ENCODE measurements at regions of chr10 and their contacts with region 1.

Region 1: DNA sequence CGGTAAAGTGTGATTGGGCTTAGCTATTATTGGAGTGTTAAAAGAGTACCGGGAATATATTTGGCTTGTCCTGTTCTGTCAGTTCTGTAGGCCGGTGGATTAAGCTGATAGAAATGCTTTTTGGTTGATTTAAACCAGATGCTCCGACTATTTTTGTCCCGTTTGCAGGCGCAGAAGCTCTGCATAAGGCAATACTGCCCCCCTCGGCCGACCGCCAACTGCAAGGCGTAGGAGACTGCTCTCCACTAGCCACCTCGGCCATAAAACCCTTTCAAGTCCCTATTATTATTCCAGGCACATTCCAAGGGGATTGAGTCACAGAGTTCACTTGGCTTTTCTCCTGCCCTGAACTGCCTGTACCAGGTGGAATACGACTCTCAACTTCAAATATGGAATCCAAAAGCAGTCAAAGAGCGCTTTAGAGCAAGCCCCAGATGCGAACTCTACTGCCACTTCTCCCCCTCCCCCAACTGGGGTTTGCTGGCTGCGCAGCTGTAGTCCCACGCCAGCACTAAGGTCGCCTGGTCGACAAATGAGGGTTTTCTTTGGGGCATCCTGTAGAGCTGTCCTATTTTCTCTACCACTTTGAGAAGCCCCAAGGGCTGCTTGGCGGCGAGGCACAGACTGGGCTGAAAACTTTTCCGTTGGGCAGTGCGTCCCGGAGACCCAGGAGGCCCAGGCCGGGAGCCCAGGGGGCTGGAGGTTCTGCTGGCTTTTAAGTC is 108.3 kb downstream of the REEP3 start:
- DNase-seq: peak; percentile 97
- ATAC-seq: peak; percentile 77
- H3K4me3 ChIP-seq: peak overlapping the region; percentile 65
- H3K27ac ChIP-seq: peak overlapping the region; percentile 96
- H3K4me1 ChIP-seq: peaks cover 27% of the 10 kb centered on the region
- H3K27me3 ChIP-seq: no peaks in the 10 kb centered on the region
- CTCF ChIP-seq: peak; percentile 78

Region 2: GRCh38 chr10:63562857-63563256 is 66.7 kb before region 1 on chr10:
- intact Hi-C with region 1: no loop called
- DNase-seq: no peak
- ATAC-seq: no peak
- H3K4me3 ChIP-seq: no peak overlapping the region
- H3K27ac ChIP-seq: no peak overlapping the region
- H3K4me1 ChIP-seq: no peaks in the 10 kb centered on the region
- H3K27me3 ChIP-seq: no peaks in the 10 kb centered on the region
- CTCF ChIP-seq: no peak

Region 3: GRCh38 chr10:63711867-63712716 is 82.6 kb after region 1 on chr10:
- intact Hi-C with region 1: loop called (anchors 5 kb)
- DNase-seq: peak; percentile 92
- ATAC-seq: peak; percentile 92
- H3K4me3 ChIP-seq: no peak overlapping the region
- H3K27ac ChIP-seq: peak overlapping the region; percentile 58
- H3K4me1 ChIP-seq: peaks cover 40% of the 10 kb centered on the region
- H3K27me3 ChIP-seq: no peaks in the 10 kb centered on the region
- CTCF ChIP-seq: no peak

Measured in upper lobe of right lung (tissue), 1 donor.